ENCODE measurements at regions of chr1 and their contacts with region 1.

Region 1: DNA sequence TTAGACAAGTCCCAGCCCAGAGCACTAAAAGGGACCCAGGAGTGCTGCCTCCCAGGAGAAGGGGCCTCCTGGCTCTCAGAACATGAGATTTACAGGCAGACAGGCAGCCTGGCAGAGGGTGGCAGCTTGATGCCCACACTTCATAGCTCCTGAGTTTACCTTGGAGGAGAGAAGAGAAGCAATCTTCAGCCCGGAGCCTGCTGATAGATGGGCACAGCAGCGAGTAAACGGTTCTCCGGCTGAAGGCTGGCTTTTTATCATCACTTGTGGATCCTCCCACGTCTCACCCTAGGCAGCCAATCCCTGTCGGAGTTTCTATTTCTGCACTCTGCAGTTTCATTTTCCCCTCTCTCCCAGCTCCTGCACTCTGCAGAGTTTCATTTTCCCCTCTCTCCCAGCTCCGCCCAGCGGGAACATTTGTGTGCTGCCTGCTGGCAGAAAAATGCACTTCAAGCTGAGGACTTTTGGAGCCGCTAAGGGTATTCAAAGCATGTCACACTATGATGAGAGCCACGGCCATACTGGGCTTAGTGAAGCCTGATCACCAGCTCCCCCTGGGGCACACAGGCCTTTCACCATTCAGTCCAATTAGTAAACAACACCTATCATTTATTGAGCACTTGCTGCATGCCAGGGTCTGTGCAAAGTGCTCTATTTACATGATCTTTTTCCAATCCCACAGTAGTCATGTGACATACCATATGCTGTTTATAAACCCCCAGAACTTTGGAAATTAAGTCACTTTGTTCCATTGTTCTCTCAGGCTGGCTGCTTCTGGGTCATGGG is at the start of gene IFI6:
- DNase-seq: peak; percentile 96
- H3K4me3 Mint-ChIP-seq: peak within 1 kb of the TSS; percentile 91
- H3K27ac Mint-ChIP-seq: peak within 1 kb of the TSS; percentile 95
- H3K4me1 Mint-ChIP-seq: peaks cover 44% of the 10 kb centered on the region
- H3K27me3 Mint-ChIP-seq: no peaks in the 10 kb centered on the region
- total RNA-seq, gene IFI6: 53.2 and 55.5 TPM in 2 replicates

Region 2: DNA sequence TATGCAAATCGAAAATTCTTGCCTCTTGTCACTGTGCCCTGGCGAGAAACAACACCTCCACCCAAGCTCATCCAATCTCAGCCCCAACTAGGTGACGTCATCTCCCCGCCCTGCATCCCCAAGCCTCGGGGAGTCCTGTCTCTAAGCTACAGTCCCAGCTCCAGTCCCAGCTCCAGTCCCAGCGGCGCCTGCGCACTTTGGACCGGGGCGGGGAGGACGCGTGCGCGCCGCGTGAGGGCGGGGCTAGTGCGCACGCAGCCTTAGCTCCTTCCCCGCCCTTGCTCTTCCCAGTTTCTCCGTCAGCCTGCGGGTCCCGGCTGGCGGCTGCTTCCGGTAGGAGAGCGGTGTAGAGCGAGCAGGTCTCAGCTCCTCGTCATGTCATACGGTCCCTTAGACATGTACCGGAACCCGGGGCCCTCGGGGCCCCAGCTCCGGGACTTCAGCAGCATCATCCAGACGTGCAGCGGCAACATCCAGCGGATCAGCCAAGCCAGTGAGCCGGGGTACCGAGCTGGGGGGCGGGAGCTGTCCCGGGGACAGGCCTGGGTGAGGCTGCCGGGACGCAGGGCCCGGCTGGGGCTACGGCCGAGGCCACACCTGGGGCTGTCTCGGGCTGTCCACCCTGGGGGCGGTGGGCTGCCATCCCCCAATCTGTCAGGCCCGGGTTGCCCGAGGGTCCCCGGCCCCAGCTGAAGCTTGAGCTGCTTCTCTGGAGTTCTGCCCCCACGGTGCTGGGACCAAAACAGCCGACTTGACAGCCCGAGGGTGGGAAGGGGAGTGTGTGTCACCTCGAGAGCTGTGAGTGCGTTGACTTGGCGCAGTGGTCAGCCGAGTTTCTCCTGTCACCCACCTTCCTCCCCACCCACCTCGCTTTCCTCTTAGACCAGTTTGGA is 101.0 kb after region 1 on chr1 and contains the start of gene STX12:
- intact Hi-C with region 1: loop called (anchors 2 kb)
- DNase-seq: peak; percentile 100
- H3K4me3 Mint-ChIP-seq: peak within 1 kb of the TSS; percentile 86
- H3K27ac Mint-ChIP-seq: peak within 1 kb of the TSS; percentile 98
- H3K4me1 Mint-ChIP-seq: peaks cover 26% of the 10 kb centered on the region
- H3K27me3 Mint-ChIP-seq: peaks cover 1% of the 10 kb centered on the region
- total RNA-seq, gene STX12: 28.5 and 28.8 TPM in 2 replicates

Region 3: DNA sequence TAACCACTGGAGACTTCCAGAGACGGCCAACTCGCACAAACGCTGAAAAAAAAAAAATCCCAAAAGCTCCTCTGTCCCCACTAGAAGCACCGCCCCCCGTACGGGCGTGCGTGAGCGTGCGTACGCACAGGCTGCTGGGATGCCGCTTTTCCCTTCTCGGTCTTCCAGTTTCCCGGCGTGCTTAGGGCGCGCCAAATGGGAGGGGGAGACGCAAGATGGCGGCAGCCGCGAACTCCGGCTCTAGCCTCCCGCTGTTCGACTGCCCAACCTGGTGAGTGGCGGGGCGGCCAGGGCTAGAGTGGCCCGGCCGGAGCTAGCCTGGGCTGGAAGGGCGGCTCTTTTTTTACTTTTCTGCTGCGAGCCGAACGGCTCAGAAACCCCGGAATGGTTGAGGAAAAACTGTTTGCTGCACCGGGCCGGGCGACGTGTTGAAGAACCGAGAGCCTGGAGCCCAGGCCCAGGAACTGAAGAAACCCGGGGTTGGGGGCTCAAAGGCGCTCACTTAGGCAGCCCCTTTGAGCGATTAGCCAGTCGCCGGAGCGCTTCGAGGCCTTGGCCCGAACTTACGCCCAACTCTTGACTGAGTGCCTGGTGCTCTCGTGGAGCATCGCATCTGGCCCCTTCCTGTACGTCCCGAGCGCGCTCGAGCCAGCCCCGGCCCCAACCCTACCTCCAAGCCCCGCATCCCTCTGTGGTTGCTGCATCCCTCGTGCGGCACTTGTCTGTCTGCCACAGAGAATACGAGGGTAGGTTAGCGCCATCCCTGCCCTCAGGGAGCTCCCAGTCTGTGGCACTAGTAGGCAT is 158.7 kb after region 1 on chr1 and contains the start of gene PPP1R8:
- intact Hi-C with region 1: loop called (anchors 2 kb)
- DNase-seq: peak; percentile 97
- H3K4me3 Mint-ChIP-seq: peak within 1 kb of the TSS; percentile 95
- H3K27ac Mint-ChIP-seq: peak within 1 kb of the TSS; percentile 90
- H3K4me1 Mint-ChIP-seq: peaks cover 22% of the 10 kb centered on the region
- H3K27me3 Mint-ChIP-seq: no peaks in the 10 kb centered on the region
- total RNA-seq, gene PPP1R8: 80.3 TPM in 2 replicates

Measured in activated CD4-positive, alpha-beta T cell treated with anti-CD3 and anti-CD28 coated beads, Interleukin-2, amount 10 ng/mL, durations not matched to agents 24 days and 14 days (primary cell).